MCF 10A (cell line): ENCODE measurements at regions of chr19 and their contacts with region 1.

Region 1: GRCh38 chr19:47075179-47075810 is 26.9 kb upstream of the TMEM160 start:
- DNase-seq: no peak
- H3K4me3 Mint-ChIP-seq: no peak overlapping the region
- H3K27ac Mint-ChIP-seq: no peak overlapping the region
- H3K4me1 Mint-ChIP-seq: no peaks in the 10 kb centered on the region
- H3K27me3 Mint-ChIP-seq: no peaks in the 10 kb centered on the region
- CTCF ChIP-seq: no peak

Region 2: DNA sequence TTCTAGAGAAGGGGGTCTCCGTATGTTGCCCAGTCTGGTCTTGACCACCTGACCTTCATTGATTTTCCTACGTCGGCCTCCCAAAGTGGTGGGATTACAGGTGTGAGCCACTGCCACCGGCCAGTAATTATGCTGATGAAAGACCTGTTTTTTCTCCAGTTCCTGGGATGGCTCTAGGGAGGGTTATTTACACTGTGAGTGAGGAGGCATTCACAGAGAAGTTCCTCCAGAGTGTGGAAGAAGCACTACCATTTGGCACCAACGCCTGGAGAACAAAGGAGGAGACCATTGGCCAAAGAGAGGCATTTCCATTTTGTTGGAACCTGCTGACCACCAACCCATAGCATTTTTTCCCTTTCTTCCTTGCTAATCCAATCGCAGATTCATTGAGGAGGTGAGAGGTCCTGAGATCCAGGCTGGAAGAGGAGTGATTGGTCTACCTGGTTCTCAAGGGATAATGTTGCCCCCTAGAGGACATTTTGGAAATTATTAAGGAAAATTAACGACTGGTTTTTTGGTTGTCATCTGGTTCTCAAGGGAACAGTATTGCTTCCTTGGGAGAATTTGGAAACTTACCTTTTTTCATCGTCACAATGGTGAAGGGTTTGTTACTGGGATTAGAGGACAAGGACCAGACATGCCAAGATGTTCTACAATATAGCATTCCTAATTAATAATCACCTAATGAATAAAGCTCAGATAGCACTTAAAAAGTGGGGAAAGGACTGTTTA is 49.8 kb after region 1 on chr19:
- CTCF ChIA-PET with region 1: interaction called, 10 read pairs
- POLR2A ChIA-PET with region 1: interaction called, 8 read pairs
- intact Hi-C with region 1: loop called (anchors 1 kb)
- DNase-seq: peak; percentile 82
- H3K4me3 Mint-ChIP-seq: no peak overlapping the region
- H3K27ac Mint-ChIP-seq: no peak overlapping the region
- H3K4me1 Mint-ChIP-seq: peaks cover 23% of the 10 kb centered on the region
- H3K27me3 Mint-ChIP-seq: no peaks in the 10 kb centered on the region
- CTCF ChIP-seq: peak; percentile 69